Transverse colon (tissue), 4 donors: ENCODE measurements at regions of chr13 and their contacts with region 1.

Region 1: DNA sequence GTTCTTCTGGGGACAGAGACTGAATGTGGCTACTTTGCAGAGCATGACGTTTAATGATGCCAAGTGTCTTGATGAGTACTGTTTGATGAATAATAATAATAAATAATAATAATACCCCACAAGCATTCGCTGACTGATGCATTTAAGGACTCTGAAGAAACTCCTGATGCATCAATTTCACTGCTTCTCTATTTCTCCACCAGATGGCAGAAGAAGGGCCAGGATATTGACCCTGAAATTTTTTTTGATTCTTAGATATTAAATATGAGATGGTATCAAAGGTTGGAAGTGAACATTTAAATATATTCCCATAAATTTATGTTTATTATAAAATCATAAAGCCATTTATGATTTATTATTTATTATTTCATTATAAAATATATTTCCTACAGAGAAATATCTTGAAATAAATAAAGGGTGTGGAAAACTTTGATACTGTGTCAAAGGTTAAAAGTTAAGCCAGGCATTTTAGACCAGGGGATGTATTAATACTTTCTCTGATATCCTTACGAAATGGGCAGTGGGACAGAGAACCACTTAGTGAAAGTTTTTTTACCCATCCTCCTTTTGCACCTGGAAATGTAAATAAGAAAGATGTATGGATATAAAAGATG is 170.9 kb downstream of the LACC1 start:
- DNase-seq: no peak
- H3K4me3 ChIP-seq: no peak overlapping the region
- H3K27ac ChIP-seq: peak overlapping the region in 3 of 4 donors; percentile 38 to 62 (median 59)
- H3K4me1 ChIP-seq: peaks cover 4 to 24% (median 14%) of the 10 kb centered on the region in 4 donors
- H3K27me3 ChIP-seq: no peaks in the 10 kb centered on the region
- CTCF ChIP-seq: peak; percentile 78 to 92 (median 82)
- EP300 ChIP-seq: no peak
- POLR2A ChIP-seq: no peak

Region 2: DNA sequence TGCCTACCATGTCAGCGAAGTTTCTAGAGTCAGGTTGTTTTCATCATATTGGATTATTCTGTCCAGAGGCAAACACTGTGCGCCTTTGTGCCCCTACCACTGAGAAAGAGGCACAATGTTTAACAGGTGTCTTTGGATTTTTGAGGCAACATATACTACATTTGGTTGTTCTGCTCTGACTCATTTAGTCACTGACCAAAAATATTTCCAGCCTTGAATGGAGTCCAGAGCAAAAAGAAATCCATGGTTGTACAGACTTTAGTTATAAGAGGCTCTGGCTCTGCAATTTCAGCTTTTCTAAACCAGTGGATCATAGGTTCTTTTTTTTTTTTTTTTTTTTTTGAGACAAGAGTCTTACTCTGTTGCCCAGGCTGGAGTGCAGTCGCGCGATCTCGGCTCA is 135.1 kb before region 1 on chr13:
- in situ Hi-C with region 1: loop called in 3 of 4 experiments (anchors 10 to 25 kb)
- intact Hi-C with region 1: loop called (anchors 5 kb)
- DNase-seq: no peak
- H3K4me3 ChIP-seq: no peak overlapping the region
- H3K27ac ChIP-seq: no peak overlapping the region
- H3K4me1 ChIP-seq: no peaks in the 10 kb centered on the region
- H3K27me3 ChIP-seq: peaks cover 3% of the 10 kb centered on the region
- CTCF ChIP-seq: no peak
- EP300 ChIP-seq: no peak
- POLR2A ChIP-seq: no peak

Region 3: GRCh38 chr13:43924549-43925245 is 125.9 kb before region 1 on chr13:
- in situ Hi-C with region 1: loop called in 3 of 4 experiments (anchors 10 to 25 kb)
- intact Hi-C with region 1: loop called (anchors 5 kb)
- DNase-seq: no peak
- H3K4me3 ChIP-seq: no peak overlapping the region
- H3K27ac ChIP-seq: no peak overlapping the region
- H3K4me1 ChIP-seq: no peaks in the 10 kb centered on the region
- H3K27me3 ChIP-seq: no peaks in the 10 kb centered on the region
- CTCF ChIP-seq: no peak
- EP300 ChIP-seq: no peak
- POLR2A ChIP-seq: no peak

Region 4: DNA sequence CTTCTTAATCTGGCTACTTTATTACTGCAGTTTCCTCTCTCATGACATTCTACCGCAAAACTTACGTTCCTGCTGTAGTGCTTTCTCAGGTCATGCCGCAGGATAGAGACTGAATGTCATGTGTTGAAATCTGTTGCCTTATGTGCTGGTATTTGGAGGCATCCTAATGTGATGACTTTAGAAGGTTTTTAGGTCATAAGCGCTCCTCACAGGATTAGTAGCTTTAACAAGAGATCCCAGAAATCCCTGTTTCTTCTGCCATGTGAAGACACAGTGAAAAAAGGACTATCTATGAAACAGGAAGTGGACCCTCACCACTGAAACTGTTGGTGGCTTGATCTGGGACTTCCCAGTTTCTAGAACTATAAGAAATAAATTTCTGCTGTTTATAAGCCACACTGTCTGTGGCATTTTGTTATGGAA is 38.4 kb after region 1 on chr13:
- in situ Hi-C with region 1: no loop called
- intact Hi-C with region 1: no loop called
- DNase-seq: no peak
- H3K4me3 ChIP-seq: no peak overlapping the region
- H3K27ac ChIP-seq: no peak overlapping the region
- H3K4me1 ChIP-seq: peaks cover 0 to 10% (median 2%) of the 10 kb centered on the region in 4 donors
- H3K27me3 ChIP-seq: no peaks in the 10 kb centered on the region
- CTCF ChIP-seq: no peak
- EP300 ChIP-seq: no peak
- POLR2A ChIP-seq: no peak

Region 5: GRCh38 chr13:44132710-44133109 is 82.2 kb after region 1 on chr13:
- in situ Hi-C with region 1: no loop called
- intact Hi-C with region 1: loop called (anchors 10 kb)
- DNase-seq: peak; percentile 21
- H3K4me3 ChIP-seq: no peak overlapping the region
- H3K27ac ChIP-seq: no peak overlapping the region
- H3K4me1 ChIP-seq: peaks cover 0 to 3% (median 1%) of the 10 kb centered on the region in 4 donors
- H3K27me3 ChIP-seq: no peaks in the 10 kb centered on the region
- CTCF ChIP-seq: no peak
- EP300 ChIP-seq: no peak
- POLR2A ChIP-seq: no peak